ENCODE measurements at regions of chr15 and their contacts with region 1.

Region 1: GRCh38 chr15:66946578-66947164 is 118.7 kb upstream of the SMAD3 start:
- DNase-seq: peak; percentile 80
- H3K4me3 Mint-ChIP-seq: no peak overlapping the region
- H3K27ac Mint-ChIP-seq: no peak overlapping the region
- H3K4me1 Mint-ChIP-seq: peaks cover 37% of the 10 kb centered on the region
- H3K27me3 Mint-ChIP-seq: no peaks in the 10 kb centered on the region
- CTCF ChIP-seq: peak; percentile 94

Region 2: DNA sequence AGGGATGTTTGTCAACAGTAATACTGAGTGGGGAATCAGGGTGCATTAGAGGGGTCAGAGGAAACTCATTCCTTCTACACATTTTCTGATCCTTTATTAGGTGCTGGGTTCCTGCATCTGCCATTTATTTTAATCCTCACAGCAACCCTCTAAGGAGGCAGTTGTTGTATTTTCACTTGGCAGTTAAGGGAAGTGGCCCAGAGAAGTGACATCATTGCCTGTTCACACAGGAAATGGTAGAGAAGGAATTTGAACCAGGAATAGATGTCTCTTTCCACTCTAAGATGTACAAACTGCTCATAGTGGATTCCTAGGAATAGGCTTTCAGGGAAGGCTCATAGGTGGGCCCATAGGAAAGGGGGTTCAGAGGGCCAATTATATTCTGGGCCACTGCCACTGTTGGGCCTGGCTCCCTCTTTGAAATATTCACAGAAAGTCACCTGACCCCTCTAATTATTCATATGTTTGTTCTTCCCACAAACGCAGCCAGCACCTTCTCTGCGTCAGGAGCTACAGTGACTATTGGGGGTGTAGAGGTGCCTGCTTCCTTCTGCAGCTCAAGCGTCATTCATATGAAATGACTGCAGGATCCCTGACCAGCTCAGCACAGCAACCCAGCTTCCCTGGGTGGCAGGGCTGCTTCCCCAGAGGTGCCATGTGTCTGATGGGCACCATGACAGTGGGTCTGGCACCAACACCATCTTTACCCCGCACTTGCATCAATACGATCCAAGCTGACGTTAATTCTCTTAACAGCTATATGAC is 45.2 kb before region 1 on chr15:
- CTCF ChIA-PET with region 1: interaction called, 3 read pairs
- intact Hi-C with region 1: loop called (anchors 5 kb)
- DNase-seq: no peak
- H3K4me3 Mint-ChIP-seq: no peak overlapping the region
- H3K27ac Mint-ChIP-seq: no peak overlapping the region
- H3K4me1 Mint-ChIP-seq: peaks cover 16% of the 10 kb centered on the region
- H3K27me3 Mint-ChIP-seq: no peaks in the 10 kb centered on the region
- CTCF ChIP-seq: no peak

Region 3: DNA sequence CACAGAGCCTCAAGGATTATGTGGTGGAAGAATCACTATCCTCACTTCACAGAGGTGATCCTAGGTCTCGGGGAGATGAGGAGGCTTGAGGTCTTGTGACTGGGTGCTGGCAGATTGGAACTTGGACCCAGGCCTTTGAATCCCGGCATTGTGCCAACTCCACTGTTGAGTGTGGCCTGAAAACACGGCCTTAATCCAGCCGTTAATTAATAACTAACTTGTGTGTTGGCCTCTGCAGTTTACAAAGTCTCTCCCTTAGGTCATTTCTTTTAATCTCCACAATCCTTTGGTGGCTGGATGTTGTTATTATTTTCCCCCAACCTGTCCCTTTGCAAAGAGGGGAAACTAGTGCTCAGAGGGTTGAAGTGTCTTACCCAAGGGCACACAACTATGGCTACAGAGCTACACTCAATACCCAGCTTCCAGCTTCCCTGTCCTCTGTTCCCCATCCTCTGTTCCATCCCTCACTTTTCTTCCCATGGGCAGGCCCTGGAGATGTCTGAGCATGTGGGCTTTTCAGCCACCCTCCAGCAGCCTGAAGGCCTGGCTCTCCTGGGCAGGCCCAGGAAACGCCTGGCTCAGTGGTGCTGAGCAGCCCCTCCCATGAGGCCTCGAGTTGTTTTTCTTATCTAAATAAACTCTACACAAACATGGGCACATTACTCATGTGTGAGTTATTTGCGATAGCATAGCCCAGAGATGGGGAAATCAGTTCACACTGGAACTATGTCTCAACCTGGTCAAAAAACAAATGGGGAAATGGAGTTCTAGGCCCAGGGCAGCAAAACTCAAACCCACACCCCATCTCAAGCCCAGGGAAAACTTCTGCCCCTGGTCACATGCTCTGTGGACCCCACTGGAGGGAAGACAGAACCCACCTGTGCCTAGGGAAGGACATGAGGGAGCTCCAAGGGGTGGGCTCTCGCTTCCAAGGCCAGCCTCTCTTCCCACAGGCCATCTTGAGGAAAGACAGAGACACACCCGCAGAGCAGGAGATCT is 101.9 kb after region 1 on chr15:
- CTCF ChIA-PET with region 1: interaction called, 5 read pairs
- intact Hi-C with region 1: loop called (anchors 5 kb)
- DNase-seq: peak; percentile 85
- H3K4me3 Mint-ChIP-seq: peak overlapping the region; percentile 65
- H3K27ac Mint-ChIP-seq: peak overlapping the region; percentile 86
- H3K4me1 Mint-ChIP-seq: peaks cover 53% of the 10 kb centered on the region
- H3K27me3 Mint-ChIP-seq: no peaks in the 10 kb centered on the region
- CTCF ChIP-seq: no peak

Region 4: DNA sequence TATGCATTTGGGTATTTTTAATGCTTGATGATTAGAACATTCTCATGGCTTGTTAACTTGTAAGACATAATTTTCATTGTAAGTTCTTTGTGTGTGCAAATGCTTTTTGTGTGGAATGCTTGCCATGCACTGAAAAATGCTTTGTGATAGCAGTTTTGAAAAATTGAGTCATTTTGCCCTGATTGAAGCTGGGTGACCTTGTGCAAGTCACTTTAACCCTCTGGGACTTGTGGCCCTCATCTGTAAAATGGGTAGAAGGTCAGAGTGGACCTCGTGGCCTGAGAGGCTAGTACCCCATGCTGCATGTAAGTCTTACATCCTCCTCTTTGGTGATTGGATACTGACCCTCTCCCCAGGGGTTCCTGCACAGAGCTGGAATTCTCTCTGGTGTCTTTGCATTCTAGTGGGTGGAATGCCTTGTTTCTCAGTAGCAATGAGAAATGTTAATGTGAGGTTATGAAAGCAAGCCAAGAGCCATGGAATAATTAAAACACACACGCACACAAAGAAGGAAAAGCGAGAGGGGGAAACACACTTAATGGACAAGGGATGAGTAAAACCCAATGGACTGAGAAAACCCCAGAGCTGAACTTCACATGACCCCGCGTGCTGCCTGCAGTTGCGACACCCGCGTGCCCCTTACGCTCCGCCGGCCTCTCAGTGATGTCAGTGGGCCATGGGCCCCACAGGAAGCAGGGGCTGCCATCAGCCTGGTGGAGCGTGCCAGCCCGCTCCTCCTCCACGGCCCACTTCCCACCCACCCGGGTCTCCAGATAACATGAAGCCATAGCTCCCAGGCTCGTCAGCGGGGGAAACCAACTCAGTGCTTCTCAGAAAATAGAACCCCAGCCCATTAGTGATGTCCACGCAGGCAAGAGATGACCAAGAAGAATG is 162.7 kb after region 1 on chr15:
- CTCF ChIA-PET with region 1: interaction called, 5 read pairs
- intact Hi-C with region 1: loop called (anchors 2 kb)
- DNase-seq: no peak
- H3K4me3 Mint-ChIP-seq: no peak overlapping the region
- H3K27ac Mint-ChIP-seq: peak overlapping the region; percentile 93
- H3K4me1 Mint-ChIP-seq: no peaks in the 10 kb centered on the region
- H3K27me3 Mint-ChIP-seq: no peaks in the 10 kb centered on the region
- CTCF ChIP-seq: no peak

Region 5: DNA sequence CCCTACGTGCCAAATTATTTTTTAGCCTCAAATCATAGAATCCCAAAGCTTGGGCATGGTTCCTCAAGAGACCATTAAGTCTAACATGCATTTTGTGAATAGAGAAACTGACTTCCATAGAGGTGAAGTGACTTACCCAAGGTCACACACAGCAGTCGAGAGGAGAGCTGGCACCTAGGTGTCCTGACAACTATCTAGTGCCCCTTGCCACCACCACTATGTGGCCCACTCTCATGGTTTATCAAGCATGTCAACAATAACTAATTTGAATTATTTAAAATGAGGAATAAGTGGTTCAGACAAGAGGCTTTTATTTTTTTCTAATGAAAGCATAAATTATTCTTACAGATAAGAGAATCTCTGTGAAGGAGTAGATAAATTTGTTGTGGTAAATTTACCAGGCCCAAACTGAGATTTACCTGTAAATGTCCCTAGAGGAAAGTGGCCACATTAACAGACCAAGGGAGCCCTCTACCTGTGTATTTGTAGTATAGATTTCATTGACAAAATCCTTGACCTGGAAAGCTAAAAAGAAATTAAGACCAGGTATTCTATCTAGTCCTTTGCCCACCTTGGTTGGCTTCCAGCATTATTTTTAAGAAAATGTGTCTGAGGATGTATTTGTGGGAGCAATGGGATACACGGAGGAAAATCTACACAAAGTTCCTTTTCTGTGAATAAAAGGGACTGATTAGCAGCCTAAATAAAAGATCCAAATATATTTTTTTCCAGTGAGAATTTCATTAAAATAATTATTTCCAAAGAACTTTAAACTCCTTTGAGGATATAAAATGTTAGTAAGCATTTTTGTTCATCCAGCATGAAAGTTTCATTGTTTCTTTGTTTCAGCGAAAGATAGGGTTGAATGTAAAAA is 357.1 kb after region 1 on chr15:
- CTCF ChIA-PET with region 1: interaction called, 22 read pairs
- intact Hi-C with region 1: loop called (anchors 1 kb)
- DNase-seq: peak; percentile 38
- H3K4me3 Mint-ChIP-seq: no peak overlapping the region
- H3K27ac Mint-ChIP-seq: no peak overlapping the region
- H3K4me1 Mint-ChIP-seq: no peaks in the 10 kb centered on the region
- H3K27me3 Mint-ChIP-seq: no peaks in the 10 kb centered on the region
- CTCF ChIP-seq: peak; percentile 53

Region 6: DNA sequence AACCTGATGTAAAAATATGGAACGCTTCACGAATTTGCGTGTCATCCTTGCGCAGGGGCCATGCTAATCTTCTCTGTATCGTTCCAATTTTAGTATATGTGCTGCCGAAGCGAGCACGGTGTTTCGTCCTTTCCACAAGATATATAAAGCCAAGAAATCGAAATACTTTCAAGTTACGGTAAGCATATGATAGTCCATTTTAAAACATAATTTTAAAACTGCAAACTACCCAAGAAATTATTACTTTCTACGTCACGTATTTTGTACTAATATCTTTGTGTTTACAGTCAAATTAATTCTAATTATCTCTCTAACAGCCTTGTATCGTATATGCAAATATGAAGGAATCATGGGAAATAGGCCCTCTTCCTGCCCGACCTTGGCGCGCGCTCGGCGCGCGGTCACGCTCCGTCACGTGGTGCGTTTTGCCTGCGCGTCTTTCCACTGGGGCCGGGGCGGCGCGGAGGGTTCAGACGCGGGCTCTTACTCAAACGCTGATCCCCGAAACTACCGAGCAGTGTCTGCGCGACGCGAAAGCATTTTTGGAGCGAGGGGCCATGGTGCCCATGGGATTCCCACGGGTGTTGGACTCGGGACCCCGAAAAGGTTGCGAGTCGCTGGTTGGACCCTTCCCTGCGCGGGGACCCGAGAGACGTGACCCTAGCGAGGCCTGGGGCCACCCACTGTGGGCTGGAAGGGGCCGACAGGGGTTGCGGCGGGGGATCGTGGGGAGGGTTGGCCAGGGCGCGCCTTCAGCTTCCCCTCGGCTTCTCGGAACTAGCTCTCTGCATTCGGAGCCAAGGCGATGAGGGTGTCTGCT is 893.5 kb after region 1 on chr15 and contains the start of gene RNU6-1:
- CTCF ChIA-PET with region 1: no interaction called
- intact Hi-C with region 1: loop called (anchors 10 kb)
- DNase-seq: peak; percentile 92
- H3K4me3 Mint-ChIP-seq: peak within 1 kb of the TSS; percentile 79
- H3K27ac Mint-ChIP-seq: peak within 1 kb of the TSS; percentile 99
- H3K4me1 Mint-ChIP-seq: peaks cover 15% of the 10 kb centered on the region
- H3K27me3 Mint-ChIP-seq: peaks cover 30% of the 10 kb centered on the region
- CTCF ChIP-seq: no peak
- total RNA-seq, gene RNU6-1: not detected in 2 replicates

Measured in Calu3 (cell line).